Colonic mucosa (tissue), 4 donors: ENCODE measurements at regions of chr6 and their contacts with region 1.

Region 1: GRCh38 chr6:56902641-56903464 is 52.1 kb upstream of the BEND6 start:
- DNase-seq: peak; percentile 30
- H3K4me3 ChIP-seq: no peak overlapping the region
- H3K27ac ChIP-seq: no peak overlapping the region
- H3K4me1 ChIP-seq: no peaks in the 10 kb centered on the region
- H3K27me3 ChIP-seq: no peaks in the 10 kb centered on the region
- CTCF ChIP-seq: peak; percentile 61

Region 2: GRCh38 chr6:56004426-56004825 is 898.4 kb before region 1 on chr6:
- intact Hi-C with region 1: no loop called
- DNase-seq: no peak
- H3K4me3 ChIP-seq: no peak overlapping the region
- H3K27ac ChIP-seq: no peak overlapping the region
- H3K4me1 ChIP-seq: no peaks in the 10 kb centered on the region
- H3K27me3 ChIP-seq: no peaks in the 10 kb centered on the region
- CTCF ChIP-seq: no peak

Region 3: DNA sequence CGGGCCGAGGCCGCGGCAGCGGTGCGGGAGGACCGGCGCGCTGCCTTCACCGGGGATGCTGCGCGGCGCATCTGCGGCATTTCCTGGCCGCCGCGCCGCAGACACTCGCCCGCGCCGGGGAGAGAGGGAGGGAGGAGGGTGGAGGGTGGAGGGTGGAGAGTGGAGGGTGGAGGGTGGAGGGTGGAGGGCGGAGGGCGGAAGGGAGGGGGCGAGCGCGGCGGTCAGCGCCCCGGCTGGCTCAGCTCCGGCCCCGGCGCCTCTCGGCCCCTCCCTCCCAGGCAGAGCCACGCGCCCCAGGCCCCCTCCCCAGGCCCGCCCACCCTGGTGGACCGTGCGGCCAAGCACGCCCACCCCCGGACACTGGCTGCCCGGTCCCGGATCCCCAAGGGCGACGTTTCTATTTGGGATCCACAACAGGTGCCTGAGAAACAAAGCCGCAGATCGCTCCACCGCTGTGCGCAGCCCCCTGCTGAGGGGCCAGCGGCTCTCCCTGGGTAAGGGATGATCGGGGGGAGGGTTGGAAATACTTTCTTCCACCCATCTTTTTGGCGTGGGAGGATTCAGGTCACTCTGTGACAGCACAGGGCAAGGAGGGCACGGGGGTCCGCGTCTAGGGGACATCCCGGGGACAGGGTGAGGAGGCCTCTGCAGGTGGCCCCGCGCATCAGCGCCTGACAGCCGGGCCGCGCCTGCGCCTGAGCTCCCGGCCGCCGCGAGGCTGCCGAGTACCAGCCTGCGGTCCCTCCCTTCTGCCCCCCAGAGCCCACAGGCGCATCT is 59.1 kb before region 1 on chr6:
- intact Hi-C with region 1: no loop called
- DNase-seq: peak; percentile 62
- H3K4me3 ChIP-seq: peak overlapping the region; percentile 49
- H3K27ac ChIP-seq: peak overlapping the region; percentile 66
- H3K4me1 ChIP-seq: no peaks in the 10 kb centered on the region
- H3K27me3 ChIP-seq: peaks cover 20% of the 10 kb centered on the region
- CTCF ChIP-seq: peak; percentile 41

Region 4: DNA sequence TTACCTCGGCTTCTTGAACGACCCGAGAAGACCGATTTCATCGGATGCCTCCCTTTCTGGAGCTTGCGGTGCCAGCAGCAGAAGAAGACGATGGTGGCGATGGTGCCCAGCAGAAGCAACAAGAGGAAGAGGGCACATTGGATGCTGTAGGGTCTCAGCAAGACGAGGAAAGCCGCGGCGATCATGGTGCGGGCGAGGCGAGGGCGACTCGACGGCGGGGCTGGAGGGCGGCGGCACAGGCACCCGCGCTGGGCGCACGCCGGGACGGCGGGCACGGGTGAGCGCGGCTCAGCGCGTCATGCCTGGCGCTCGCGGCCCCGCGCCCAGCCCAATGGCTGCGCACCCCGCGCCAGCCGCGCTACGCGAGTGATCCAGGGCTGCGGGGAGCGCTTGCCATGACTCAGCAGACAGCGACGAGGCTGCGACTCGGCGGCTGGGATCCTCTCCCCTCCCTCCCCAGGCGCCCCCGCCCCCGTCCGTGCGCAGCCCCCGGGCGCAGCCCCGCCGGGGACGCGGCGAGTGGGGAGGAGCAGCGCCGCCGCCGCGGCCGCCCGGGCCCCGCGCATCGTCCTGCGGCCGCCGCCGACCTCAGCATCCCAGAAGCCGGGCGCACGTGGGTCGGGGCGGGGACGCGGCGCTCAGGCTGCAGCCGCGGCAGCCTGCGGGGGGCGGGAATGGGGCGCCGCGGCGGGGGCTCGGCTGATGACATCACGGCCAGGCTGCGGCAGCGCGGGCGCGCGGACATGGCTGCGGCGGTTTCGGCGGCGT is 51.7 kb after region 1 on chr6 and contains the start of gene BEND6:
- intact Hi-C with region 1: loop called (anchors 5 kb)
- DNase-seq: peak; percentile 21
- H3K4me3 ChIP-seq: peak within 1 kb of the TSS; percentile 40
- H3K27ac ChIP-seq: peak within 1 kb of the TSS; percentile 44
- H3K4me1 ChIP-seq: no peaks in the 10 kb centered on the region
- H3K27me3 ChIP-seq: peaks cover 18% of the 10 kb centered on the region
- CTCF ChIP-seq: no peak
- total RNA-seq, gene BEND6: 0.32 to 0.61 TPM

Region 5: DNA sequence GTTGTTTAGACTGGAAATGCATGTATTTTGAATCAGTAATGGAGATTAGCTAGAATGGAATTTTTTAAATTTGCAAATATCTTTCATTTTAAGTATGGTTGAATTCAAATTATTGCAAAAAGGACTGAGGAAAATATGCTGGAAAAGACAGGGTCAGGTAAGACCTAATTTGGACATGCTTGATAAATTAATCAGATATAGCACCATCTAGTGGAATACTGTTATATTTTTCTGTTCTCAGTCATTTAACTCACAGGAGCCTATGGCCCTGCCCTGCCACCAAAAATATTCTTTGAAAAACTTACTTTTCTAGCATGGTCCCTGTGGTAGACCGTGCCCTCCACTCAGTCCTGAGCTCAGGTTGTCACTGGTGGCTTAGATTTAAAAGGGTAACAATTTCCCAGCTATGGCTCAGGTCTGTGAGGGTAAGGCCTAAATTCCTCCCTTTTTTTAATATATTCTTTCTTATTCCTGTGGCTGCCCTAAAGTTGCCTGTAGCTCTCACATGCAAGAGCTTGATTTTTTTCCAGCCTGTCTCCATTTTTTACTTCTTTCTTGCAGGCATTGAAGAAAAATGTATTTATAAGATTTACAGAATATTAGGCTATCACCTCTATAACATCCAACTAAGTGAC is 118.3 kb after region 1 on chr6:
- intact Hi-C with region 1: loop called (anchors 5 kb)
- DNase-seq: no peak
- H3K4me3 ChIP-seq: no peak overlapping the region
- H3K27ac ChIP-seq: no peak overlapping the region
- H3K4me1 ChIP-seq: no peaks in the 10 kb centered on the region
- H3K27me3 ChIP-seq: no peaks in the 10 kb centered on the region
- CTCF ChIP-seq: peak; percentile 41

Region 6: GRCh38 chr6:57324538-57324937 is 421.7 kb after region 1 on chr6:
- intact Hi-C with region 1: loop called (anchors 5 kb)
- DNase-seq: no peak
- H3K4me3 ChIP-seq: no peak overlapping the region
- H3K27ac ChIP-seq: no peak overlapping the region
- H3K4me1 ChIP-seq: no peaks in the 10 kb centered on the region
- H3K27me3 ChIP-seq: no peaks in the 10 kb centered on the region
- CTCF ChIP-seq: no peak